HepG2 (cell line): ENCODE measurements at regions of chr5 and their contacts with region 1.

Region 1: GRCh38 chr5:96336351-96336985 is 96.6 kb downstream of the PCSK1 start:
- DNase-seq: peak; percentile 84
- ATAC-seq: peak; percentile 90
- H3K4me3 ChIP-seq: peak overlapping the region in 1 of 3 experiments; percentile 28; a peak in 1 of 6 replicates
- H3K27ac ChIP-seq: peak overlapping the region; percentile 25
- H3K4me1 ChIP-seq: peaks cover 71% of the 10 kb centered on the region
- H3K27me3 ChIP-seq: no peaks in the 10 kb centered on the region
- CTCF ChIP-seq: peak; percentile 87
- EP300 ChIP-seq: peak in 1 of 2 experiments; percentile 50; a peak in 2 of 4 replicates
- POLR2A ChIP-seq: no peak
- RAD21 ChIP-seq: peak; percentile 85

Region 2: GRCh38 chr5:95858661-95859326 is 477.7 kb before region 1 on chr5:
- CTCF ChIA-PET with region 1: no interaction called
- POLR2A ChIA-PET with region 1: interaction called, 10 read pairs
- in situ Hi-C with region 1: loop called (anchors 5 kb)
- intact Hi-C with region 1: loop called (anchors 5 kb)
- DNase-seq: peak; percentile 90
- ATAC-seq: peak; percentile 75
- H3K4me3 ChIP-seq: peak overlapping the region; percentile 10 to 47 (median 32); a peak in 4 of 6 replicates
- H3K27ac ChIP-seq: peak overlapping the region; percentile 71
- H3K4me1 ChIP-seq: peaks cover 76% of the 10 kb centered on the region
- H3K27me3 ChIP-seq: no peaks in the 10 kb centered on the region
- CTCF ChIP-seq: peak; percentile 100
- EP300 ChIP-seq: peak in 1 of 2 experiments; percentile 63; a peak in 1 of 4 replicates
- POLR2A ChIP-seq: peak; percentile 28 to 51; a peak in 2 of 4 replicates
- RAD21 ChIP-seq: peak; percentile 99

Region 3: GRCh38 chr5:95984287-95984938 is 352.1 kb before region 1 on chr5:
- CTCF ChIA-PET with region 1: no interaction called
- POLR2A ChIA-PET with region 1: interaction called, 19 read pairs
- in situ Hi-C with region 1: no loop called
- intact Hi-C with region 1: no loop called
- DNase-seq: no peak
- ATAC-seq: no peak
- H3K4me3 ChIP-seq: no peak overlapping the region
- H3K27ac ChIP-seq: peak overlapping the region; percentile 40
- H3K4me1 ChIP-seq: peaks cover 67% of the 10 kb centered on the region
- H3K27me3 ChIP-seq: no peaks in the 10 kb centered on the region
- CTCF ChIP-seq: no peak
- EP300 ChIP-seq: no peak
- POLR2A ChIP-seq: no peak
- RAD21 ChIP-seq: no peak

Region 4: DNA sequence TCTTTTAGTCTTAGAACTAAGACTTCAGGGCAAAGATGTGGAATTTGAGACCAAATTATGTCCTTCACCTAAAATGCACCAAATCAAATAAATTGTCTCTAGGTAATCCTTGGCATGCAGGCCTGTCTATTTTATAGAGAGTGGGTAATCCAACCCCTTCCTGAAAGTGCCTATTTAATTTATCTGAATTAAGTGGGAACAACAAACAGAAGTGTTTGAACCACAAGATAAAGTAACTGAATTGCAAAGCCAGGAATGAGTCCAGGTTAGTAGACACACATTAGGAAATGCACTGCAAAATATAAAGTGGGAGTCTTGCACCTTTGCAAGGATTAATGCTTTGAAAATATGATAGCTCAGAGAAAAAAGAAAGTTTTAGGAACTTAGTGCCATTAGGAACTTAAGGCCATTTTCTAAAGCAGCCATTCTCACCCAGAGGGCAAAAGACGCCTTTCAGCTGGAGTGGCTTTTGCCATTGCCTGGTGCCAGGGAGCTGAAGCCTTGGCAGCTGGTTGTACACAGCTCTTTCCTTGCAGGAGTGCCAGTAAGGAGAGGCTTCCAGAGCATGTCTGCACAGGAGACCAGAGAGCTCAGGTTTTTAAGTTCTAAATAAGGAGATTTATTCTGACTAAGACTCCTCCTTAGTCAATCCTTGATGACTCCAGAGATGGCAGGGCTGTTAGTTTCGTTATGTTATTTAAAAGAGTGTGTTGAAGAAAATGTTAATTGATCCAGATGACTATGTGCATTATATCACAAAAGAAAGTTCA is 223.1 kb before region 1 on chr5:
- CTCF ChIA-PET with region 1: no interaction called
- POLR2A ChIA-PET with region 1: interaction called, 5 read pairs
- in situ Hi-C with region 1: no loop called
- intact Hi-C with region 1: loop called (anchors 1 kb)
- DNase-seq: no peak
- ATAC-seq: no peak
- H3K4me3 ChIP-seq: no peak overlapping the region
- H3K27ac ChIP-seq: no peak overlapping the region
- H3K4me1 ChIP-seq: peaks cover 89% of the 10 kb centered on the region
- H3K27me3 ChIP-seq: no peaks in the 10 kb centered on the region
- CTCF ChIP-seq: no peak
- EP300 ChIP-seq: no peak
- POLR2A ChIP-seq: no peak
- RAD21 ChIP-seq: no peak

Region 5: GRCh38 chr5:96247097-96247701 is 89.3 kb before region 1 on chr5:
- CTCF ChIA-PET with region 1: no interaction called
- POLR2A ChIA-PET with region 1: no interaction called
- in situ Hi-C with region 1: no loop called
- intact Hi-C with region 1: loop called (anchors 1 kb)
- DNase-seq: no peak
- ATAC-seq: no peak
- H3K4me3 ChIP-seq: no peak overlapping the region
- H3K27ac ChIP-seq: no peak overlapping the region
- H3K4me1 ChIP-seq: peaks cover 77% of the 10 kb centered on the region
- H3K27me3 ChIP-seq: no peaks in the 10 kb centered on the region
- CTCF ChIP-seq: no peak
- EP300 ChIP-seq: no peak
- POLR2A ChIP-seq: no peak
- RAD21 ChIP-seq: no peak

Region 6: GRCh38 chr5:96781031-96781937 is 444.8 kb after region 1 on chr5:
- CTCF ChIA-PET with region 1: no interaction called
- POLR2A ChIA-PET with region 1: no interaction called
- in situ Hi-C with region 1: no loop called
- intact Hi-C with region 1: no loop called
- DNase-seq: peak; percentile 39
- ATAC-seq: peak; percentile 94
- H3K4me3 ChIP-seq: no peak overlapping the region
- H3K27ac ChIP-seq: peak overlapping the region; percentile 47
- H3K4me1 ChIP-seq: peaks cover 17% of the 10 kb centered on the region
- H3K27me3 ChIP-seq: no peaks in the 10 kb centered on the region
- CTCF ChIP-seq: no peak
- EP300 ChIP-seq: 0 out of 4 replicates have a peak, but pooled peaks of 1 of the 2 experiments have one; percentile 21
- POLR2A ChIP-seq: no peak
- RAD21 ChIP-seq: no peak